ENCODE measurements at regions of chr6 and their contacts with region 1.

Region 1: GRCh38 chr6:89829591-89830385 is at the start of gene CASP8AP2:
- DNase-seq: peak; percentile 93 to 98 (median 98)
- H3K4me3 ChIP-seq: peak within 1 kb of the TSS; percentile 85 to 86
- H3K4me3 Mint-ChIP-seq: peak within 1 kb of the TSS; percentile 98 to 100 (median 99)
- H3K27ac ChIP-seq: peak within 1 kb of the TSS; percentile 74
- H3K27ac Mint-ChIP-seq: peak within 1 kb of the TSS; percentile 79 to 99 (median 97)
- H3K4me1 ChIP-seq: peaks cover 32% of the 10 kb centered on the region
- H3K4me1 Mint-ChIP-seq: peaks cover 17 to 52% (median 37%) of the 10 kb centered on the region in 4 donors
- H3K27me3 ChIP-seq: no peaks in the 10 kb centered on the region
- H3K27me3 Mint-ChIP-seq: no peaks in the 10 kb centered on the region
- total RNA-seq, gene CASP8AP2: 59.4 to 61.7 TPM

Region 2: DNA sequence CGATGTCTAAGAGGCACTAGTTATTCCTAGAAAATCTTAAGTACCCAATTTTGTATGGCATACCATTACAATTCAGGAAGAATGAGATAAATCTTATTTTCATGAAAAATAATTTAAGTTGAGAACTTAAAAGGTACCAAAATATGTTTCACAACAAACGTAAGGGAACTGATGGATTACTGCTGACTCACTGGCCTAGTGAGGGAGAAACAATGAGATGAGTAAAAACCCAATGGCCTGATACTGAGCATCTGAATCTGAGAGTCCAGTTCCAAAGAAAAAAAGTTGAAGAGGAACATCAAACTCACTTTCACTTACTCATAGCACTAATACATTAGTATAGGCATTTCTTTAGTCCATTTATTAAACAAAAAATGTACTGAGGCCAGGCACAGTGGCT is 66.2 kb before region 1 on chr6:
- CTCF ChIA-PET with region 1: no interaction called
- POLR2A ChIA-PET with region 1: no interaction called
- intact Hi-C with region 1: no loop called
- DNase-seq: no peak
- H3K4me3 ChIP-seq: no peak overlapping the region
- H3K4me3 Mint-ChIP-seq: no peak overlapping the region
- H3K27ac ChIP-seq: no peak overlapping the region
- H3K27ac Mint-ChIP-seq: peak overlapping the region in 2 of 7 donors; percentile 12 to 17
- H3K4me1 ChIP-seq: no peaks in the 10 kb centered on the region
- H3K4me1 Mint-ChIP-seq: no peaks in the 10 kb centered on the region
- H3K27me3 ChIP-seq: no peaks in the 10 kb centered on the region
- H3K27me3 Mint-ChIP-seq: no peaks in the 10 kb centered on the region

Region 3: GRCh38 chr6:89794324-89794723 is 35.5 kb before region 1 on chr6:
- CTCF ChIA-PET with region 1: no interaction called
- POLR2A ChIA-PET with region 1: interaction called, 5 read pairs
- intact Hi-C with region 1: loop called (anchors 1 kb)
- DNase-seq: peak; percentile 34 to 47 (median 37)
- H3K4me3 ChIP-seq: peak overlapping the region in 1 of 2 donors; percentile 29
- H3K4me3 Mint-ChIP-seq: peak overlapping the region in 7 of 8 donors; percentile 58 to 85 (median 76)
- H3K27ac ChIP-seq: no peak overlapping the region
- H3K27ac Mint-ChIP-seq: peak overlapping the region; percentile 1 to 68 (median 61)
- H3K4me1 ChIP-seq: peaks cover 27% of the 10 kb centered on the region
- H3K4me1 Mint-ChIP-seq: peaks cover 20 to 31% (median 26%) of the 10 kb centered on the region in 4 donors
- H3K27me3 ChIP-seq: no peaks in the 10 kb centered on the region
- H3K27me3 Mint-ChIP-seq: no peaks in the 10 kb centered on the region

Region 4: GRCh38 chr6:89840538-89840937 is 10.8 kb after region 1 on chr6:
- CTCF ChIA-PET with region 1: interaction called, 4 read pairs
- POLR2A ChIA-PET with region 1: interaction called, 22 read pairs
- intact Hi-C with region 1: no loop called
- DNase-seq: no peak
- H3K4me3 ChIP-seq: no peak overlapping the region
- H3K4me3 Mint-ChIP-seq: peak overlapping the region in 1 of 8 donors; percentile 11
- H3K27ac ChIP-seq: no peak overlapping the region
- H3K27ac Mint-ChIP-seq: peak overlapping the region in 4 of 7 donors; percentile 8 to 69 (median 52)
- H3K4me1 ChIP-seq: peaks cover 57% of the 10 kb centered on the region
- H3K4me1 Mint-ChIP-seq: peaks cover 34 to 64% (median 51%) of the 10 kb centered on the region in 4 donors
- H3K27me3 ChIP-seq: no peaks in the 10 kb centered on the region
- H3K27me3 Mint-ChIP-seq: no peaks in the 10 kb centered on the region

Region 5: DNA sequence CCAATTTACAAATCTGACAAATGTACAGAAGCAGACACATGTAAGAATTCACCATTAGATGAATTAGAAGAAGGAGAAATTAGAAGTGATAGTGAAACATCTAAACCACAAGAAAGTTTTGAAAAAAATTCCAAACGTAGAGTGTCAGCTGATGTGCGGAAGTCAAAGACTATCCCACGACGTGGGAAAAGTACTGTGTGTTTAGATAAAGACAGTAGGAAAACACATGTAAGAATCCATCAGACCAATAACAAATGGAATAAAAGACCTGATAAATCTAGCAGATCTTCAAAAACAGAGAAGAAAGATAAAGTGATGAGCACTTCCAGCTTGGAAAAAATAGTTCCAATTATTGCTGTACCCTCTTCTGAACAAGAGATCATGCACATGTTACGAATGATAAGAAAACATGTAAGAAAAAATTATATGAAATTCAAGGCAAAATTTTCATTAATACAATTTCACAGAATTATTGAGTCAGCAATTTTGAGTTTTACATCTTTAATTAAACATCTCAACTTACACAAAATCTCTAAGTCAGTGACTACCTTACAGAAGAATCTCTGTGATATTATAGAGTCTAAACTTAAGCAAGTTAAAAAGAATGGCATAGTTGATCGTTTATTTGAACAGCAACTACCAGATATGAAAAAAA is 36.4 kb after region 1 on chr6:
- CTCF ChIA-PET with region 1: no interaction called
- POLR2A ChIA-PET with region 1: no interaction called
- intact Hi-C with region 1: no loop called
- DNase-seq: no peak
- H3K4me3 ChIP-seq: no peak overlapping the region
- H3K4me3 Mint-ChIP-seq: no peak overlapping the region
- H3K27ac ChIP-seq: no peak overlapping the region
- H3K27ac Mint-ChIP-seq: no peak overlapping the region
- H3K4me1 ChIP-seq: no peaks in the 10 kb centered on the region
- H3K4me1 Mint-ChIP-seq: peaks cover 4 to 10% (median 7%) of the 10 kb centered on the region in 4 donors
- H3K27me3 ChIP-seq: no peaks in the 10 kb centered on the region
- H3K27me3 Mint-ChIP-seq: no peaks in the 10 kb centered on the region

Measured in CD4-positive, alpha-beta memory T cell (primary cell).